Esophagus muscularis mucosa (tissue), 4 donors: ENCODE measurements at regions of chr11 and their contacts with region 1.

Region 1: GRCh38 chr11:94623120-94623735 is 56.1 kb downstream of the PIWIL4 start:
- DNase-seq: no peak
- H3K4me3 ChIP-seq: no peak overlapping the region
- H3K27ac ChIP-seq: no peak overlapping the region
- H3K4me1 ChIP-seq: peaks cover 0 to 6% (median 0%) of the 10 kb centered on the region in 4 donors
- H3K27me3 ChIP-seq: no peaks in the 10 kb centered on the region
- CTCF ChIP-seq: peak; percentile 78 to 88 (median 86)
- EP300 ChIP-seq: no peak
- POLR2A ChIP-seq: no peak

Region 2: GRCh38 chr11:94767761-94768601 is 144.8 kb after region 1 on chr11 and contains the start of gene AMOTL1:
- intact Hi-C with region 1: loop called (anchors 10 kb)
- DNase-seq: peak; percentile 97
- H3K4me3 ChIP-seq: peak within 1 kb of the TSS; percentile 69 to 98 (median 86)
- H3K27ac ChIP-seq: peak within 1 kb of the TSS; percentile 90 to 99 (median 96)
- H3K4me1 ChIP-seq: peaks cover 16 to 79% (median 68%) of the 10 kb centered on the region in 4 donors
- H3K27me3 ChIP-seq: no peaks in the 10 kb centered on the region
- CTCF ChIP-seq: peak in 2 of 3 experiments; percentile 20 to 32
- EP300 ChIP-seq: peak; percentile 24
- POLR2A ChIP-seq: peak; percentile 67
- total RNA-seq, gene AMOTL1: 172 to 259 (median 182) TPM

Region 3: DNA sequence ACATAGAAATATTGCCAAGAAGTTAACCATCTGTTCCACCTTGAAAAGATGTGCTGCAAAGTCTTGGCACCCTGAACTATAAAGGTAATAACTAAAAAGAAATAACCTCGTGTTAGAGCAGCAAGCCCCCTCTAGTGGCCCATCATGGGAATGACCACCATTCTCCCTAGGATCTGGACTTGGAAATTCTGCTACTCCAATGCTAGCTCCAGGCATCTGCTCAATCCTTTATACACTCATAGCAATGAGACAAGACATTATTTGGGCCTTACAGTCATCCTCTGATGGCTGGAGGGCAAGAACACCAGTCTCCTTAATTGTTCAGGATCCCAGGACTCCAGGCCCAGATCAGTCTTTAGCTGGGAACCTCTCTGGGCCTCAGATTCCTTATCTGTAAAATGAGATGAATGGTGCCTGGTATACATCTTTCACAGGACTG is 274.1 kb after region 1 on chr11:
- intact Hi-C with region 1: loop called (anchors 5 kb)
- DNase-seq: peak; percentile 93
- H3K4me3 ChIP-seq: no peak overlapping the region
- H3K27ac ChIP-seq: peak overlapping the region in 1 of 4 donors; percentile 34
- H3K4me1 ChIP-seq: peaks cover 0 to 7% (median 2%) of the 10 kb centered on the region in 4 donors
- H3K27me3 ChIP-seq: no peaks in the 10 kb centered on the region
- CTCF ChIP-seq: peak; percentile 82 to 93 (median 83)
- EP300 ChIP-seq: no peak
- POLR2A ChIP-seq: no peak